Transverse colon (tissue), 4 donors: ENCODE measurements at regions of chr1 and their contacts with region 1.

Region 1: DNA sequence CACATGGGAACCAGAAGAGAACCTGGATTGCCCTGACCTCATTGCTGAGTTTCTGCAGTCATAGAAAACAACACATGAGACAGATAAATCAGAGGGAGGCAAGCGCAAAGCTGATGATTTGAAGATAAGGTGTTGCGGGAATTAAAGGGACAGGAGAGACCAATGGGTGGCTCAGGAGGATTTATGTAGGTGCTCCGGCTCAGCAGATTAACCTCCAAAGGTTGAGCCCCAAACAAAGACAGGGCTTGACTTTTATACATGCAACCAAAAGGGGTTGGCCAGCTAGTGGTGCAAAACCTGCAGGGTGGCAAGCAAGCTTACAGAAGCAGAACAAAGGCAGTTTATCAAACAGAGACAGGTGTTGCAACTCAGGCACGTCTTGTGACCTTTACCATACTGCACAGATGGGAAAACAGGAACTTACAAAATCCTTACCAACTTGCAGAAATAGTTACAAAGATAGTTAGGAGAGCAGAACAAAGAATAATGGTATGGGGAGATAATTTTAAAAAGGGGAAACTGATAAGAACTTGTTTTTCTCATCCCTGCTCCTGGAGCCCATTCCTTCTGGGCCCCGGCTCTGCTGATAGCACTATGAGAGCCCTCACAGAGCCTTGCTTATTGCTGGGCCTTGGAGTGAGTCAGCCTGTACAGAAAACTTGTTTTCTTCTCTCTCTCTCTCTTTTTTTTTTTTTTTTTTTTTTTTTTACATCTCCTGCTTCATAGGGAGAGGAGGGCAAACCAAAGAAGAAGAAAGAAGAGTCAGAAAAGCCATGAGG is 93.6 kb downstream of the SNRPE start:
- DNase-seq: no peak
- H3K4me3 ChIP-seq: no peak overlapping the region
- H3K27ac ChIP-seq: no peak overlapping the region
- H3K4me1 ChIP-seq: no peaks in the 10 kb centered on the region
- H3K27me3 ChIP-seq: no peaks in the 10 kb centered on the region
- CTCF ChIP-seq: no peak
- EP300 ChIP-seq: no peak
- POLR2A ChIP-seq: no peak

Region 2: GRCh38 chr1:204003529-204003928 is 48.6 kb after region 1 on chr1:
- in situ Hi-C with region 1: no loop called
- intact Hi-C with region 1: loop called (anchors 2 kb)
- DNase-seq: no peak
- H3K4me3 ChIP-seq: no peak overlapping the region
- H3K27ac ChIP-seq: no peak overlapping the region
- H3K4me1 ChIP-seq: peaks cover 0 to 4% (median 0%) of the 10 kb centered on the region in 4 donors
- H3K27me3 ChIP-seq: no peaks in the 10 kb centered on the region
- CTCF ChIP-seq: no peak
- EP300 ChIP-seq: no peak
- POLR2A ChIP-seq: no peak

Region 3: DNA sequence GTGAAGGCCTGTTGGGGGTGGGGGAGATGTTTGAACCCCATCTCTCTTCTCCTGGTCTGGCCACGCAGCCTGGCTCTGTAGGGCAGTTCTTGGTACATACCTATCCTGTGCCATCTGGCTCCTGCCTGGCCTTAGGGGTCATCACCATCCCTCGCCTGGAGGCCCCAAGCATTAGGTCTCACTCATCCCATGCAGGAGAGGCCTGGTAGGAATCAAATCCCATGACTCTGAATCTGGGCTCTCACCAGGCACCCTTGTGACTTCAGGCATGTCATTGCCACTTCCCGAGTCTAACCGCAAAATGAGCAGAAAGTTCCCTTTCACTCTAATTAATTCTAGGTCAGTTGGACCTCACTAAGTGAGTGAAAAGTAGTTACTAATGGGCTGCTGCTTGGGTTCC is 159.6 kb after region 1 on chr1:
- in situ Hi-C with region 1: no loop called
- intact Hi-C with region 1: no loop called
- DNase-seq: no peak
- H3K4me3 ChIP-seq: no peak overlapping the region
- H3K27ac ChIP-seq: no peak overlapping the region
- H3K4me1 ChIP-seq: no peaks in the 10 kb centered on the region
- H3K27me3 ChIP-seq: no peaks in the 10 kb centered on the region
- CTCF ChIP-seq: no peak
- EP300 ChIP-seq: no peak
- POLR2A ChIP-seq: no peak